Aorta (tissue), 5 donors: ENCODE measurements at regions of chrX and their contacts with region 1.

Region 1: DNA sequence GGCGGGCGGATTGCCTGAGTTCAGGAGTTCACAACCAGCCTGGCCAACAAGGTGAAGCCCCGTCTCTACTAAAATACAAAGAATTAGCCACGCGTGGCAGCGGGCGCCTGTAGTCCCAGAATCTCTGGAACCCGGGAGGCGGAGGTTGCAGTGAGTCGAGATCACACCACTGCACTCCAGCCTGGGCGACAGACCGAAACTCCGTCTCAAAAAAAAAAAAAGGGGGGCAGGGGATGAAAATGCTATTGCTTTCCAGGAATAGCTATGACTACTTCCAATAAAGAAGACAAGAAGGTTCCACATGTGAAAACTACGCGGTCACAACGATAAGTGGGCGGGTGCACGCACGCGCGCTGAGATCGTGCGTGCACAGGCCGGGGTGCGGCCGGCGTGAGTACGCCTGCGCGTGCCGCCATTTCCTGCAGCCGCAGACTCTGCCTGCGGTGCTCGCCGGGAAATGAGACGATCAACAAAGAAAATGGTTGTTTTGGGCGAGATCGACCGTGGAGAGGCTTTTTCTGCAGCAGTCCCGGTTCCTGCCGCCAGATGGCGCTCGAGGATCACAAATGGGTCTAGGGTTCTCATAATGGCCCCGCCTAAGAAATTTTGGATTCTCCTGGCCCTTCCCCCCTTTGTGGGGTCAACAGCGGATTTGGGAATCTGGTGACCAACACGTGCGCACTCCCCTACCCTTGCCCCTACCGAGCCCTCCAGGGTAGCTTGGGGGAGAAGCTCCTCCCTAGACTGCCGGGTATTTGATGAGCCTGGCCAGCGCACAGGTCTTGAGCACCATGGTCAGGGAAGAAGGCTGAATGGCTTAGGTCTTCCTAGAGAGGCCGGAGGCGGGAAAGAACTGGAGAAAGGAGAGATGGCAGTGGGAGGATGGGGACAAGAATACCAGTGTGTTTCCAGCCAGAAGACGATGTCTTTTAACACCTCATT is 35.1 kb downstream of the PNMA5 start:
- DNase-seq: peak; percentile 93 to 95
- ATAC-seq: peak; percentile 95
- H3K4me3 ChIP-seq: no peak overlapping the region
- H3K27ac ChIP-seq: peak overlapping the region in 1 of 2 donors; percentile 45
- H3K4me1 ChIP-seq: no peaks in the 10 kb centered on the region
- H3K27me3 ChIP-seq: no peaks in the 10 kb centered on the region

Region 2: GRCh38 chrX:153947009-153947769 is 988.4 kb after region 1 on chrX:
- intact Hi-C with region 1: loop called (anchors 10 kb)
- DNase-seq: peak; percentile 85 to 90
- ATAC-seq: peak; percentile 77
- H3K4me3 ChIP-seq: no peak overlapping the region
- H3K27ac ChIP-seq: no peak overlapping the region
- H3K4me1 ChIP-seq: no peaks in the 10 kb centered on the region
- H3K27me3 ChIP-seq: no peaks in the 10 kb centered on the region

Region 3: DNA sequence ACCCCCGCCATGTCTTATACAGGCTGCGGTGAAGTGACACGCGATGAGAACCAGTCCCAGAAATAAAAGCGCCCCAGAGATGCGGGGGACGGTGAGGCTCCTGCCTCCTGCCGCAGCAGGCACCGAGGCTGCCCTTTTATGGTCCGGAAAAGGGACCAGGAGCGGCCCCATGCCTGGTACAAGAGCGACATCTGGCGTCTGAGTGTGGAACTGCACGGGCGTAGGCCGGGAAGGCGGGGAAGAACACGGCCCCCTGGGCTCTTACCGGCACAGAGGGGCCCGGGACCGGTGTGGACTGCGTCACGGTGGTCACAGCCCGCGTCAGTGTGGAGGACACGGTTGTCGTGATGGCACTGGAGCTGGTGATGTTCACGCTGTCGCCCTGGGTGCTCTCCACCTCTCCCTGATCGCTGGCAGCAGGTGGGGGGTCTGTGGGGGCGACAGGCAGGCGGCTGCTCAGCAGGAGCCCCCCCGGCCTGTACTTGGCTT is 994.6 kb after region 1 on chrX:
- intact Hi-C with region 1: loop called (anchors 10 kb)
- DNase-seq: peak; percentile 84 to 93
- ATAC-seq: peak; percentile 89
- H3K4me3 ChIP-seq: no peak overlapping the region
- H3K27ac ChIP-seq: peak overlapping the region in 1 of 2 donors; percentile 19
- H3K4me1 ChIP-seq: no peaks in the 10 kb centered on the region
- H3K27me3 ChIP-seq: no peaks in the 10 kb centered on the region

Region 4: DNA sequence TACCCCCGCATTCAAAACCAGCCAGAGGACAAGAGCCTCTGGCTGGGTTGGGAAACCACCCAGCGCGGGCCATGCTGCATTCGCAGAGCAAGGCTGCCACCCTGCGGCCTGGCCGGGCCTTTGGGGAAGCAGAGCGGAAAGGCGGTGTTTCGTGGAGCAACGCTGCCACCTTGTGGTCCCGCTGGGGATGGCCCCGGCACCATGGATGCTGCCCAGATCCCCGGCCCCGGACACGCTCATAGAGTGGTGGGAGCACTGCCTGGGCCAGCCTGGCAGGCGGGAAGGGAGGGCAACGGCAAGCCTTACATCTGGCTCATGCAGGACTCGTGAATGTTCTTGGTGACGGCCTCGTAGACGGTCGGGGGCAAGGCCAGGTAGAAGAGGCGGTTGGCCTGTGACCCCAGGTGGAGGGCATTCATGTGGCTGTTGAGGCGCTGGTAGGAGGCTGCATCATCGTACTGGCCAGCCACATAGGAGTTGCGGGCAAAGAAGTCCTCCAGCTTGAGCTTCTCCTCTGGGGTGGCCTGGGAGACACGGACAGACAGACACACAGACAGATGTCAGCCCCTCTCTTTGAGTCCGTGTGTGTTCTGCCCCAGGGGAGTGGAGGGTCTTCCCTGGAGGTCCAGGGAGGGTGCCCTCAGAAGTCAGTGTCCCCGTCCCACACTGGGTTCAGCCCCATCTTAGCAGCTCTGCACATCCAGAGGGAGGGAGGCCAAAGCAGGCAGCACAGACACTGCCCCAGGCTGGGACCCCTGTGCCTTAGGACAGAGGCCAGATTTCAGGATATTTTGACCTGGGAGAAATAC is 1576.3 kb after region 1 on chrX:
- intact Hi-C with region 1: loop called in 1 of 2 experiments (anchors 5 kb)
- DNase-seq: peak; percentile 93 to 97
- ATAC-seq: peak; percentile 94
- H3K4me3 ChIP-seq: no peak overlapping the region
- H3K27ac ChIP-seq: no peak overlapping the region
- H3K4me1 ChIP-seq: no peaks in the 10 kb centered on the region
- H3K27me3 ChIP-seq: no peaks in the 10 kb centered on the region